AG04449 (cell line): ENCODE measurements at regions of chr11 and their contacts with region 1.

Region 1: DNA sequence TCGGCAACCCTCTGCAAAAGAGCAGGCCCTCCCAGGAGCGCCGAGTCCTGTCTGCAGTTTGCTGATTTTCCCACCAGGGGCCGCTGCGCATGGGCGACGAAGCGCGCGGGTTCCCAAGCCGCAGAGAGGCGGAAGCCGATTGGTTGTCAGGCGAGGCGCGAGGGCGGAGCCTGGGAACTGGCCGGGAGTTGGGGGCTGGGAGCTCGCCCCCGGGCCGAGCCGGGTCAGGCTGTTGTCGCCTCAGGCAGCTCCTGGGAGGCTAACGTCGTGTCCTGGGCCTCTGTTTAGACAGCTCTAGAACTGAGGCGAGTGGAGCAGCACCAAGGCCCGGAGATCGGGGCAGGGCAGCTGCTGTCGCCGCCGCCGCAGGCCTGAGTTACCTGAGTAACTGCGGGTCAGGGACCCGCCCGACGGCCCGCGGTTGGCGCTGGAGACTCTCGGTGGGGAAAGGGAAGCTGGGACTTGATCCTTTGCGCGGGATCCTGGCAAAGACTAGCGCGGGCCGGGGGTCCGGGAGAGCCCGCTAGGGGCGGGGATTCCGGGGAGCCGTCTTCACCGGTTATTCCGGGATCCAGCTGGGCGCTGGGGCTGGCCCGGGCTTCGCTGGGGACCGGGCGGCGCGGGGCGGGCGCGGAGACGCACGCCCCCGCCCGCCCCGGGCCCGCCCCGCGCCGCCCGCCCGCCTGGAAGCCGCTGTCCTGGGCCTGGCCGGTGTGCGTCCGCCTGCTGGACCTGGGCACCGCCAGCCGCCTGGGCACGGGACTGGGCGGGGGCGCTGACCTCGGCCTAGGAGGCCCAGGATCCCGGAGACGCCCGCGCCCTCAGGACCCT is at the start of gene STIM1:
- DNase-seq: peak; percentile 45
- H3K4me3 ChIP-seq: peak within 1 kb of the TSS; percentile 85
- CTCF ChIP-seq: peak; percentile 97

Region 2: DNA sequence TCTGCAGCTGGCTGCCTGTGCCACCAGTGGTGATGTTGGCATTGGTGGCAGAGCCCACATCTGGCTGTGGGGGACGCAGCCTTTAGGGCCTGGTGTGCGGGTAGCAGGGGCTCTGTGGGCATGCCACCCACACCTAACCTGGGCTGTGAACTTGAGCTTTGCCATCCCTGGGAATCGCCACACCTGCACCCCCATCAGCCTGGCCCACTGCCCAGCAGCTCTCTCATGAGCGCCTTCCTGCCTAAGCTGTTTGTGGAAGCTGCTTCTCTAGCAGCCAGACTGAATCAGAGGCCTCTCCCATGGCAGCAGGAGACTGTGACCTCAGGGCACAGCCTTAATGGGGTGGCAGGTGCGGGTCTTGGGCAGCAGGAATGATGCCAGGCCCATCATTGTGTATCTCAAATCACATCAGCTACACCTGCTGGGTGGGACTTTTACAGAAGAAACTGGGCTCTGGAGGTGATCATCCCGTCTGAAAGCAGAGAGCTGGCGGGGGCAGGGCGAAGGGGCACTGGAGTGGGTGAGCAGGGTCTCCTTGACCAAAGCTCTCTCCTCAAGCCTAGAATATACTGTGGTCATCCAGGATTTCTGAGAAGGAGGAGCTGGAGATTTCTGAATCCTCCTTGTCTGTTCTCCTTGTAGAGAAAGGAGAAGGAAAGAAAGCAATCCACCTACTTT is 780.1 kb before region 1 on chr11:
- CTCF ChIA-PET with region 1: no interaction called
- POLR2A ChIA-PET with region 1: no interaction called
- DNase-seq: no peak
- H3K4me3 ChIP-seq: no peak overlapping the region
- CTCF ChIP-seq: no peak

Region 3: DNA sequence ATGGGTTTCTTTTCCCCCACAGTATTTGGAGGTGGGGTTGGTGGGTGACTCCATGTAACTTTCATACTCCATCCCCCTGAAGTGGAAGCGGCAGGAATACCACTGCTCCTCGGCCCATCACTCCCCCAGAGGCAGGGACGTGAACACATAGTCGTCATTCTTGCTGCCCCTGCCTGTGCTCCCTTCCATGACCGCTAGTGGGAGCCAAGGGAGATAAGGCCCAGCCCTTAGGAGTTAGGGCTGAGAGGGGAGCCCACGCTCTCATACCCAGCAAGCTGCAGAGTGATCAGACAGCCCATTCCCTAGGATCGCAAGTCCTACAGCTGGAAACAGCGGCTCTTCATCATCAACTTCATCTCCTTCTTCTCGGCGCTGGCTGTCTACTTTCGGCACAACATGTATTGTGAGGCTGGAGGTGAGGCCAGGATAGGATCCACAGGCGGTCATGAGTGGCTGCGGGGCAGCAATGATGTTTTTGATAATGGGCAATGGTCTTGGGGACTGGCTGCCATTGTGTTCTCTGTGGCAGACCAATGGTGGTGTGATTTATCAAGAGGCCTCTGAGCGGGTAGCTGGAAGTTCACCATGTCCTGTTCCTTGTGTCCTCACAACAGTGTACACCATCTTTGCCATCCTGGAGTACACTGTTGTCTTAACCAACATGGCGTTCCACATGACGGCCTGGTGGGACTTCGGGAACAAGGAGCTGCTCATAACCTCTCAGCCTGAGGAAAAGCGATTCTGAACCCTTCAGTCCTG is 30.3 kb before region 1 on chr11:
- CTCF ChIA-PET with region 1: interaction called, 332 read pairs
- POLR2A ChIA-PET with region 1: no interaction called
- DNase-seq: no peak
- H3K4me3 ChIP-seq: no peak overlapping the region
- CTCF ChIP-seq: peak; percentile 64

Region 4: GRCh38 chr11:3879216-3879966 is 24.2 kb after region 1 on chr11:
- CTCF ChIA-PET with region 1: interaction called, 51 read pairs
- POLR2A ChIA-PET with region 1: no interaction called
- DNase-seq: no peak
- H3K4me3 ChIP-seq: no peak overlapping the region
- CTCF ChIP-seq: no peak

Region 5: GRCh38 chr11:3939211-3939610 is 84.0 kb after region 1 on chr11:
- CTCF ChIA-PET with region 1: interaction called, 10 read pairs
- POLR2A ChIA-PET with region 1: interaction called, 3 read pairs
- DNase-seq: peak; percentile 80
- H3K4me3 ChIP-seq: no peak overlapping the region
- CTCF ChIP-seq: no peak

Region 6: DNA sequence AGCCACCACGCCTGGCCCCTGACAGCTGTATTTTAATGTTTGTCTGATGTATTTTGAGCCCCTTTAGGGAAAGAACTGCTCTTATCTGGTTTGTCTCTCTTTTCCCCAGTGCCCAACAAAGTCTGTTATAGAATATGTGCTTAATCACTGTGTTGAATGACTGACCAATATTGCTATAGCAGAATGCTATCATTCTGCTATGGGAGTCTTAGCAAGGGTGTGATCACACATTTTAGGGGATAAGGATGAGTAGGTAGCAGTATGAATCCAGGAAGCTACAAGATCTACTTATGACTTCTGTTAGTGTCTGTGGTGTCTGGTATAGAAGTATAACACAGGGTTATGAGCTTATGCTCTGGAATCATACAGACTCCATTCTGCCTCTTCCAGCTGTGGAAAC is 121.9 kb after region 1 on chr11:
- CTCF ChIA-PET with region 1: interaction called, 21 read pairs
- POLR2A ChIA-PET with region 1: no interaction called
- DNase-seq: no peak
- H3K4me3 ChIP-seq: no peak overlapping the region
- CTCF ChIP-seq: no peak

Region 7: DNA sequence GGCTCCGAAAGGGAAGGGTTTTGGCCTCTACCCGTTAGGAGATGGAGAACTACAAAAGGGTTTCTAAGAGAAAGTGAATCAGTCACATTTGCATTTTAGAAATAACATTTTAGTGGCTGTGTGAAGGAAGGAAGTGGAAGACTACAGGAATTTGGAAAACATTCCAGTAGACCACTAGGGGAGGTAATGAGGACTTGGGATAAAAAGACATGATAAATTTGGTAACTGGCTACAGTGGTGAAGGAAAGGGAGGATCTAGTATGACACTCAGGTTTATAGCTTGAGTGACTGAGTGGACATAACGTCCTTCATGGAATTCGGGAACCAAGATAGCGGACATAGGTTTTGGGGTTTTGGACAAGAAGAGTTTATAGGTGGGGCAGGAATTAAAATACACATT is 232.4 kb after region 1 on chr11:
- CTCF ChIA-PET with region 1: interaction called, 77 read pairs
- POLR2A ChIA-PET with region 1: no interaction called
- DNase-seq: no peak
- H3K4me3 ChIP-seq: no peak overlapping the region
- CTCF ChIP-seq: peak; percentile 21